WTC11 (cell line): ENCODE measurements at regions of chr6 and their contacts with region 1.

Region 1: DNA sequence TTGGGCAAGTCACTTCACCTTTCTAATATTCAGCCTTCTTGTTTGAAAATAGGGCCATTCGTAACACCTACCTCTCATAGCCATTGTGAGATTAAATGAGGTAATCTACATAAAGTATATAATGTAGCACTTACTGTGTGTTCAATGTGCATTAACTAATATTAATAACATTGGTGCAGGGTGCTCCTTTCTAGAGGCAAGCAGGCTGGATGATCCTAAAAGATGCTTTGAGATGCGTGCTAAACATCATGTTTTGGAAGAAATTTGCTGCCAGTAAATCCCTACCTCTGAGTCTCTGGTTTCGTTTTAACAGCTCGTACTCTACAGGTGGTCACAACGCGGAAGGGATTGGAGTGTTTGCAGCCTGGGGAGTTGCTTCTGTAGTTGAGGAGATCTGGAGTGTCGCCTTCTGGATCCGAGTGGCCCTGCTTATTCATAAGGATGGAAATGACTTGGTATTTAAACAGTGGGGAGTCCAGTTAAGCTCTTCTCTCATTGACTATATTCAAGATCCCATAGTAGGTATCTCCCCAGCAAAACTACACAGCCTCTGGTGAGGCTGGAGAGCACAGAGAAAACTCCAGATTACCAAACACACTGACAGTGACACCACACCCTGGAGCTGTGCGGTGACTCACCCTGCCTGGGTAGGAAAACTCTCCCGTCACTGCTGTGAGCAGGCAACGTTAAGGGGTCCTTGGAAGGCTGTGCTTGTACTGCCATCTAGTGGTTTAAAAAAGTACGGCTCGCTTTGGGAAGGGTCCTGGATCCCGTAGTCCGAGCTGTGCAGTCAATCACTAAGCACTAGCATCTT is 107.9 kb downstream of the MAP3K7 start:
- DNase-seq: peak; percentile 81
- ATAC-seq: peak; percentile 89
- H3K4me3 Mint-ChIP-seq: no peak overlapping the region; the same call in 1 of the 2 replicates
- H3K27ac Mint-ChIP-seq: peak overlapping the region; percentile 43
- H3K4me1 Mint-ChIP-seq: peaks cover 33% of the 10 kb centered on the region
- H3K27me3 Mint-ChIP-seq: no peaks in the 10 kb centered on the region
- CTCF ChIP-seq: peak; percentile 86

Region 2: GRCh38 chr6:89952686-89953085 is 526.3 kb before region 1 on chr6:
- CTCF ChIA-PET with region 1: interaction called, 13 read pairs
- POLR2A ChIA-PET with region 1: no interaction called
- DNase-seq: no peak
- ATAC-seq: no peak
- H3K4me3 Mint-ChIP-seq: no peak overlapping the region
- H3K27ac Mint-ChIP-seq: no peak overlapping the region
- H3K4me1 Mint-ChIP-seq: peaks cover 6% of the 10 kb centered on the region
- H3K27me3 Mint-ChIP-seq: no peaks in the 10 kb centered on the region
- CTCF ChIP-seq: no peak

Region 3: DNA sequence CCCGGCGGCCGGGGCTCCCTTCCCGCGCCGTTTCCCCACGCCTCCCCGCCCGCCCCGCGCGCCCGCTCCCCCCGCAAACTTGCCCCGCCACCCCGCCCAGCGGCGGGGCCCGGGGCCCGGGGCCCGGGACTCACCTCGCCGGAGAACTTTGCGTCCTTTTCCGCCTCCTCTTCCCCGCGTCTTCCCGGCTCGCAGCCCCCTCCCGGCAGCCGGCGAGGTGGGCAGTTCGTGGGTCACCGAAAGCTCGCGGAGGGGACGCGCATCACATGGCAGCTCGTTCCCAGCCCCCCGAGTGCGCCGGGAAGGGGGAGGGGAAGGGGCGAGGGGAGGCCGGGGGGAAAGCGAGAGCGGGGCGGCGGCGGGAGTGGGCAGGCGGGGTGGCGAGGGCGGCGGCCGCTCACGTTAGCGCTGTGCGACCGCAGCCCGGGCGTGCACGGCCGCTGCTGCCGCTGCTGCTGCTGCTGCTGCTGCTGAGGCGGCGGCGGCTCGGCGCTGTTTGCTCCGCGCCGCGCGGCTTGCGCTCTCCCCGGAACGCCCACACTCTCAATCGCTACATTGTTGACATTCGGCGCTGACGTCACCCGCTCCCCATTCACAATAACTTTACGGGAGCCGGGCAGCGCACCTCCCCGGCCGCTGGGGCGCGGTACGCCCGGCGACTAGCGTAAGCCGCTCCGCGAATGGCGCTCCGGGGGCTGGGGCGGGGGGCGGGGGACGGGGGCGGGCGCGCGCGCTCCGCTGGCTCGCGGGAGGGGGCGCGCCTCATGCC is 182.5 kb before region 1 on chr6 and contains the start of gene BACH2:
- CTCF ChIA-PET with region 1: interaction called, 25 read pairs
- POLR2A ChIA-PET with region 1: no interaction called
- DNase-seq: peak; percentile 95
- ATAC-seq: peak; percentile 75
- H3K4me3 Mint-ChIP-seq: peak within 1 kb of the TSS; percentile 74
- H3K27ac Mint-ChIP-seq: no peak within 1 kb of the TSS
- H3K4me1 Mint-ChIP-seq: peaks cover 34% of the 10 kb centered on the region
- H3K27me3 Mint-ChIP-seq: peaks cover 51% of the 10 kb centered on the region
- CTCF ChIP-seq: no peak
- total RNA-seq, gene BACH2: 3.9 to 5.9 TPM (median 4.5 TPM) in 3 replicates

Region 4: GRCh38 chr6:90403489-90404381 is 75.3 kb before region 1 on chr6:
- CTCF ChIA-PET with region 1: interaction called, 13 read pairs
- POLR2A ChIA-PET with region 1: no interaction called
- DNase-seq: no peak
- ATAC-seq: peak; percentile 82
- H3K4me3 Mint-ChIP-seq: no peak overlapping the region
- H3K27ac Mint-ChIP-seq: no peak overlapping the region
- H3K4me1 Mint-ChIP-seq: peaks cover 28% of the 10 kb centered on the region
- H3K27me3 Mint-ChIP-seq: peaks cover 29% of the 10 kb centered on the region
- CTCF ChIP-seq: no peak

Region 5: DNA sequence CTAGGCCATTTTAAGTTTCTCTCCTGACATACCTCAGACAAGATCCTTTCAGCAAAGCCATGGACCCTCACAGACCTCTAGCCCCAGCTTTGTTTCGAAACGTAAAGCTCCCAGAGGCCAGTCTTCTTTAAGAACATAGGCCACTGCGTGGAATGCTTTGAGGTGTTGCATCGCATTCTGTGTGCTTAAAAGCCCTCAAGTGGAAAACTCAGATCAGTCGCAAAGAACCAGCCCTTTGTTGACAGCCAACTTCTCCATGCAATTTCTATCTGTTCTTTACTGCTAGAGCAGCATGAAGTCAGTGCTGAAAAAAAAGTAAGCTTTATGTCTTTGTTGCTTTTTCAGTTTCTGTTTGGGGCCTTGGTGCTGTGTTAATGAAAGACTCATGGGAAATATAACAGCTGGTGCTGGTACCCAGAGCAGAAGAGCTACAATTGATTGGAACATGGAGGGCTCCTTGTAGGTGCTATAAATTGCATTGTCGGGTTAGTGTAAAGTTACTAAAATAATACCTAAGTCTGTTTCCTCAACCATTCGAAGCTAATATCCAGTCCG is 34.8 kb before region 1 on chr6:
- CTCF ChIA-PET with region 1: interaction called, 30 read pairs
- POLR2A ChIA-PET with region 1: no interaction called
- DNase-seq: no peak
- ATAC-seq: no peak
- H3K4me3 Mint-ChIP-seq: no peak overlapping the region
- H3K27ac Mint-ChIP-seq: no peak overlapping the region
- H3K4me1 Mint-ChIP-seq: peaks cover 37% of the 10 kb centered on the region
- H3K27me3 Mint-ChIP-seq: no peaks in the 10 kb centered on the region; the same call in 1 of the 2 replicates
- CTCF ChIP-seq: no peak

Region 6: GRCh38 chr6:90493332-90493731 is 14.3 kb after region 1 on chr6:
- CTCF ChIA-PET with region 1: interaction called, 30 read pairs
- POLR2A ChIA-PET with region 1: no interaction called
- DNase-seq: no peak
- ATAC-seq: no peak
- H3K4me3 Mint-ChIP-seq: no peak overlapping the region
- H3K27ac Mint-ChIP-seq: peak overlapping the region; percentile 93
- H3K4me1 Mint-ChIP-seq: peaks cover 61% of the 10 kb centered on the region
- H3K27me3 Mint-ChIP-seq: no peaks in the 10 kb centered on the region
- CTCF ChIP-seq: no peak

Region 7: DNA sequence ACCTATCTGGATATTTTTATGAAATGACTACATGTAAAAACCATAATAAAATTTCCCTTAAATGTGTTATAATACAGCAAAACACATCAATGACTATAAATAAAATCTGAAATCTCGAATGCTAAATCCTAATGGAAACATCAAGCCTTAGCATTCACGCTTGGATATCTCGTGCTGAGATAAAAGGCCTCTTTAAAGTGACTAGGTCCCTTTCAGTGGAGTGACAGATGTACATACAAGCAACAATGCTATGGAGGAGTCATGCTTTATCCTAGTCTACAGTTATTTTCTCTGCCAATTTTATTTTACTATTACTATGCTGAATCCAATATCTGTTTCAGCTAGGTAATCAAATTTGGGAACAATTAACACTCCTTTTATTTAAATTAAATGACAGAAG is 35.5 kb after region 1 on chr6:
- CTCF ChIA-PET with region 1: no interaction called
- POLR2A ChIA-PET with region 1: no interaction called
- DNase-seq: no peak
- ATAC-seq: no peak
- H3K4me3 Mint-ChIP-seq: no peak overlapping the region
- H3K27ac Mint-ChIP-seq: no peak overlapping the region
- H3K4me1 Mint-ChIP-seq: no peaks in the 10 kb centered on the region
- H3K27me3 Mint-ChIP-seq: no peaks in the 10 kb centered on the region
- CTCF ChIP-seq: no peak